ENCODE measurements at regions of chr22 and their contacts with region 1.

Region 1: GRCh38 chr22:25362215-25362882 is 142.9 kb downstream of the CRYBB2 start:
- DNase-seq: peak; percentile 83
- H3K4me3 ChIP-seq: peak overlapping the region in 1 of 2 experiments; percentile 56; a peak in 1 of 4 replicates
- H3K27ac ChIP-seq: no peak overlapping the region
- H3K4me1 ChIP-seq: no peaks in the 10 kb centered on the region; a peak in 1 of 4 replicates
- H3K27me3 ChIP-seq: no peaks in the 10 kb centered on the region
- CTCF ChIP-seq: peak; percentile 64
- EP300 ChIP-seq: no peak
- RAD21 ChIP-seq: peak; percentile 74

Region 2: GRCh38 chr22:25327018-25327755 is 35.2 kb before region 1 on chr22:
- CTCF ChIA-PET with region 1: no interaction called
- POLR2A ChIA-PET with region 1: no interaction called
- DNase-seq: no peak
- H3K4me3 ChIP-seq: no peak overlapping the region
- H3K27ac ChIP-seq: no peak overlapping the region
- H3K4me1 ChIP-seq: no peaks in the 10 kb centered on the region
- H3K27me3 ChIP-seq: no peaks in the 10 kb centered on the region
- CTCF ChIP-seq: no peak
- EP300 ChIP-seq: no peak
- RAD21 ChIP-seq: no peak

Region 3: GRCh38 chr22:25419237-25420113 is 57.1 kb after region 1 on chr22:
- CTCF ChIA-PET with region 1: interaction called, 16 read pairs
- POLR2A ChIA-PET with region 1: no interaction called
- DNase-seq: no peak
- H3K4me3 ChIP-seq: peak overlapping the region in 1 of 2 experiments; percentile 26; a peak in 3 of 4 replicates
- H3K27ac ChIP-seq: peak overlapping the region in 1 of 2 experiments; percentile 71; a peak in 2 of 4 replicates
- H3K4me1 ChIP-seq: peaks cover 0 to 16% of the 10 kb centered on the region in 2 experiments; a peak in 1 of 4 replicates
- H3K27me3 ChIP-seq: no peaks in the 10 kb centered on the region; the same call in 1 of the 2 replicates
- CTCF ChIP-seq: no peak
- EP300 ChIP-seq: no peak
- RAD21 ChIP-seq: no peak